ENCODE measurements at regions of chr5 and their contacts with region 1.

Region 1: DNA sequence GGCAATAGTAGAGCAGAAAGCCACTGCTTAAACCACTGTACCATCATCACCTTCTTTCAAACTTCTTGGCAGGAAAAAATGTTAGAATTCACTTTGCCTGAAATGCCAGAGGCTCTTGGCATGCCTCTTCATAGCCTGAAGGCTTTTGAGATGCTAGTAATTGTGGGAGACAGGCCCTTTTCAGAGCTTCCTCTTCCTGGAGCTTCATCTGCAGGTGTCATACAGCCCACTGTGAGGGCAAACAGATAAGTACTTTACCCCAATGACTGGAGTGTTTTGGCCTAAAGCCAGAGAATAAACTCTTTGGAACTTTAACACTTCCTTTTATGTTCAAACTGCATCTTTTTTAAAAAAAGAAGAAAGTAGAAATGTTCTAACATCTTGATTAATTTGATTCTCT is 81.3 kb upstream of the TMEM171 start:
- DNase-seq: no peak
- H3K4me3 ChIP-seq: no peak overlapping the region
- H3K27ac ChIP-seq: no peak overlapping the region
- H3K4me1 ChIP-seq: no peaks in the 10 kb centered on the region
- H3K27me3 ChIP-seq: no peaks in the 10 kb centered on the region
- CTCF ChIP-seq: no peak
- POLR2A ChIP-seq: no peak

Region 2: DNA sequence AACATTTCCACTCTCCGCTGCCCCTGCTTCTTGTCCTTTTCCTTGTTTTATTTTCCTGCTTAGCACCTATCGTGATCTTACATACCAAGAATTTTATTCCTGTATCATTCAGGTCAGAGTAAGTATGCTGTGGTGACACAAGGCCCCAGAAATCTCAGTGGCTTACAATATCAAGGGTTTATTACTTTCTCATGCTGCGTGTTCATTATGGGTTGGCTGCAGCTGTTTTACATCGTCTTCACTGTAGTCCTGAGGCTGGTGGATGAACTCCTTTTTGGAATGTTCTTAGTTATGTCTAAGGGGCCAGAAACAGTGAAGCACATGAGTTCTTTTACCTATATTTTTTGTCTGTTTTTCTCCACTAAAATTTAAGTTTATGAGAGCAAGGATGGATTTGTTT is 32.0 kb before region 1 on chr5:
- intact Hi-C with region 1: no loop called
- DNase-seq: no peak
- H3K4me3 ChIP-seq: no peak overlapping the region
- H3K27ac ChIP-seq: no peak overlapping the region
- H3K4me1 ChIP-seq: no peaks in the 10 kb centered on the region
- H3K27me3 ChIP-seq: no peaks in the 10 kb centered on the region
- CTCF ChIP-seq: no peak
- POLR2A ChIP-seq: no peak

Region 3: DNA sequence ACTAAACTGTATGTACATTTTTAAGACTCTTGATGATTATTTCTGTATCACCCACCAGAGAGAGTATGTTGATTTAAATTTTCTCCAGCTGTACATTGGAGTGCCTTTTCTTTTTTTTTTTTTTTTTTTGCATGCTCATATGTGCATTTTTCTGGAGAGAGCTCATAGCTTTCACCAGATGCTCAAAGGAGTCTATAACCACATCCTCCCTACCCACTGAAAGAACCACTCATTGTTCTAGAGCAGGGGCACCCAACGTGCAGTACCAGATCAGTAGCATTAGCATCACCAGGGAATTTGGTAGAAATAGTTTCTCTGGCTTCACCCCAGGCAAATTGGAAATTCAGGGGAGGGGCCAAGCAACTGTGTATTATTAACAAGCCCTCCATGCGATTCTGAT is 27.4 kb after region 1 on chr5:
- intact Hi-C with region 1: no loop called
- DNase-seq: no peak
- H3K4me3 ChIP-seq: no peak overlapping the region
- H3K27ac ChIP-seq: no peak overlapping the region
- H3K4me1 ChIP-seq: no peaks in the 10 kb centered on the region
- H3K27me3 ChIP-seq: no peaks in the 10 kb centered on the region
- CTCF ChIP-seq: no peak
- POLR2A ChIP-seq: no peak

Region 4: GRCh38 chr5:73096239-73096575 is 57.1 kb after region 1 on chr5:
- intact Hi-C with region 1: no loop called
- DNase-seq: no peak
- H3K4me3 ChIP-seq: no peak overlapping the region
- H3K27ac ChIP-seq: no peak overlapping the region
- H3K4me1 ChIP-seq: no peaks in the 10 kb centered on the region
- H3K27me3 ChIP-seq: no peaks in the 10 kb centered on the region
- CTCF ChIP-seq: no peak
- POLR2A ChIP-seq: no peak

Region 5: DNA sequence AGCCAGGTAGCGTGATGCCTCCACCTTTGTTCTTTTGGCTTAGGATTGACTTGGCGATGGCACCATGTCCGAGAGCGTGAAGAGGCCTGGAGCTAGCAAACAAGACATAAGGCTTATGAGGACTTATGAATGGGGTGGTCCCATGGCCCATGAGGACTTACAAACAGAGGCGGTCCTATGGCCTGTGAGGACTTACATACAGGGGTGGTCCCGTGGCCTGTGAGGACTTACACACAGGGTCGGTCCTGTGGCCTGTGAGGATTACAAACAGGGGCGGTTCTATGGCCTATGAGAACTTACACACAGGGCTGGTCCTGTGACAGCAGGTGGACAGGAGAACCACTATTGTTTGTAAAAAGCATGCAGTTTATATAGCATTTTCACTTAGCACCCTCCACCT is 430.8 kb after region 1 on chr5:
- intact Hi-C with region 1: loop called (anchors 5 kb)
- DNase-seq: no peak
- H3K4me3 ChIP-seq: no peak overlapping the region
- H3K27ac ChIP-seq: no peak overlapping the region
- H3K4me1 ChIP-seq: no peaks in the 10 kb centered on the region
- H3K27me3 ChIP-seq: no peaks in the 10 kb centered on the region
- CTCF ChIP-seq: no peak
- POLR2A ChIP-seq: no peak